Caco-2 (cell line): ENCODE measurements at regions of chr10 and their contacts with region 1.

Region 1: DNA sequence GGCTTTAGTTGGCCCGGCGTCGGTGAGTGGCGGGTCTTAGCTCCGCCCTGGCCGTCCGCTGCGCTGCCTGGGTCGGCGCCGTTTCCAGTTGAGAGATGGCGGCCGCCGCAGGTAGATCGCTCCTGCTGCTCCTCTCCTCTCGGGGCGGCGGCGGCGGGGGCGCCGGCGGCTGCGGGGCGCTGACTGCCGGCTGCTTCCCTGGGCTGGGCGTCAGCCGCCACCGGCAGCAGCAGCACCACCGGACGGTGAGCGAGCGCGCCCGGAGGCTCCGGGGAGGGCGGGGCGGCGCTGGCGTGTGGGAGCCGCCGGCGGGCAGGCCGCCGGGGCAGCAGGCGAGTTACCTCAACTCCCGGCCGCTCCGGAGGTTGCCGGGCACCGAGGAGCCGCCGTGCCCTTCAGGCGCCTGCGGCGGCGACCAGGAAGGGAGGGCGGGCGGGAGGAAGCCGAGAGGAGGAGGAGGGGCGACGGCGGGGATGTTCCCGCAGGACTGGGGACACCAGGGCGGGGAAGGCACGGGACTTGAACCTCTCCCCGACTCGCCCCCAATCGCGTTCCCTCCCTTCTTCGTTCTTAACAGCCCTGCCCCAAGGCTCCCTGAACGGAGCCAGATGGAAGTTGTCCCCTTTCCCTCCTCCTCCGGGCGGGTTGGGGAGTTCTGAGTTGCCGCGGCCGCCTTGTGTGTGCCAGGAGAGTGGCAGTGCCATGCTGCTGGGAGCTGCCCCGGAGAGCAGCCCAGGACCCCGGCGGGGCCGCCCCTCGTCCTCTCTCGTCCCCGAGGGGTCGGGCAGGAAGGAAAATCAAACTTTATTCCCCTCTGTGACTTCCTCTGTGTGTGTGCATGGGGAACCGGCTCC is at the start of gene MCU:
- DNase-seq: peak; percentile 57 to 98
- H3K4me3 ChIP-seq: peak within 1 kb of the TSS; percentile 80
- H3K4me3 Mint-ChIP-seq: peak within 1 kb of the TSS; percentile 84
- H3K27ac Mint-ChIP-seq: peak within 1 kb of the TSS; percentile 42
- H3K4me1 ChIP-seq: peaks cover 45% of the 10 kb centered on the region
- H3K4me1 Mint-ChIP-seq: peaks cover 52% of the 10 kb centered on the region
- H3K27me3 ChIP-seq: no peaks in the 10 kb centered on the region
- H3K27me3 Mint-ChIP-seq: no peaks in the 10 kb centered on the region
- CTCF ChIP-seq: no peak
- total RNA-seq, gene MCU: 52.2 and 62.5 TPM in 2 replicates

Region 2: GRCh38 chr10:72625608-72626443 is 66.5 kb before region 1 on chr10 and contains the start of gene MICU1:
- CTCF ChIA-PET with region 1: no interaction called
- POLR2A ChIA-PET with region 1: interaction called, 26 read pairs
- intact Hi-C with region 1: loop called (anchors 1 kb)
- DNase-seq: peak; percentile 98
- H3K4me3 ChIP-seq: peak within 1 kb of the TSS; percentile 59
- H3K4me3 Mint-ChIP-seq: peak within 1 kb of the TSS; percentile 75
- H3K27ac Mint-ChIP-seq: peak within 1 kb of the TSS; percentile 80
- H3K4me1 ChIP-seq: peaks cover 13% of the 10 kb centered on the region; the same call in 1 of the 2 replicates
- H3K4me1 Mint-ChIP-seq: peaks cover 8% of the 10 kb centered on the region
- H3K27me3 ChIP-seq: no peaks in the 10 kb centered on the region
- H3K27me3 Mint-ChIP-seq: no peaks in the 10 kb centered on the region
- CTCF ChIP-seq: no peak
- total RNA-seq, gene MICU1: 68.8 and 83.2 TPM in 2 replicates

Region 3: DNA sequence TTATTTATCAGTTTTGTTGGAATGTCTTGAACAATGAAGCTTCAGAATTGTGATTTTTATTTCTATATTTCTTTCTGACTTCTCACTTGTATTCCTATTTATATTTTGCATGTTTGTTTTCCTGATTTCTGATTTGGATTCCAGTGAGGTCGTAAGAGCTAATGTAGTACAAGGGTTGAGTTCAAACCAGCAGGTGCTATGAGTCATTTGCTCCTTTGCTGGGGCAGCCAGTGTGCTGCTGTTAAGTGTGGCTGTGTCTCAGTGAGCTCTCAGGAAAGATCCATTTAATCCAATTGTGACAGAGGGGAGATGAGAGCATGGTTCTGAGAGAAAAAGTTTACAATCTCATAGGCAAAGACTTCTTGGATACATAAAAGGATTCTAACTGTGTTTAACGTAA is 48.2 kb after region 1 on chr10:
- CTCF ChIA-PET with region 1: interaction called, 5 read pairs
- POLR2A ChIA-PET with region 1: interaction called, 3 read pairs
- intact Hi-C with region 1: loop called (anchors 2 kb)
- DNase-seq: peak; percentile 51 to 60
- H3K4me3 ChIP-seq: no peak overlapping the region
- H3K4me3 Mint-ChIP-seq: no peak overlapping the region
- H3K27ac Mint-ChIP-seq: no peak overlapping the region
- H3K4me1 ChIP-seq: peaks cover 30% of the 10 kb centered on the region
- H3K4me1 Mint-ChIP-seq: peaks cover 24% of the 10 kb centered on the region
- H3K27me3 ChIP-seq: no peaks in the 10 kb centered on the region
- H3K27me3 Mint-ChIP-seq: no peaks in the 10 kb centered on the region
- CTCF ChIP-seq: no peak

Region 4: GRCh38 chr10:72852508-72852907 is 160.2 kb after region 1 on chr10:
- CTCF ChIA-PET with region 1: interaction called, 13 read pairs
- POLR2A ChIA-PET with region 1: no interaction called
- intact Hi-C with region 1: no loop called
- DNase-seq: no peak
- H3K4me3 ChIP-seq: no peak overlapping the region
- H3K4me3 Mint-ChIP-seq: no peak overlapping the region
- H3K27ac Mint-ChIP-seq: no peak overlapping the region
- H3K4me1 ChIP-seq: no peaks in the 10 kb centered on the region
- H3K4me1 Mint-ChIP-seq: no peaks in the 10 kb centered on the region
- H3K27me3 ChIP-seq: no peaks in the 10 kb centered on the region
- H3K27me3 Mint-ChIP-seq: no peaks in the 10 kb centered on the region
- CTCF ChIP-seq: no peak